Panc1 (cell line): ENCODE measurements at regions of chr12 and their contacts with region 1.

Region 1: GRCh38 chr12:114689075-114689994 is 5.4 kb upstream of the TBX3 start:
- DNase-seq: no peak
- ATAC-seq: no peak
- H3K4me3 ChIP-seq: no peak overlapping the region
- H3K27ac ChIP-seq: no peak overlapping the region
- H3K4me1 ChIP-seq: no peaks in the 10 kb centered on the region
- H3K27me3 ChIP-seq: peaks cover 7% of the 10 kb centered on the region; the same call in 1 of the 2 replicates
- CTCF ChIP-seq: no peak

Region 2: GRCh38 chr12:116411977-116412376 is 1722.6 kb after region 1 on chr12:
- CTCF ChIA-PET with region 1: no interaction called
- POLR2A ChIA-PET with region 1: interaction called, 14 read pairs
- in situ Hi-C with region 1: no loop called
- intact Hi-C with region 1: no loop called
- DNase-seq: no peak
- ATAC-seq: no peak
- H3K4me3 ChIP-seq: no peak overlapping the region
- H3K27ac ChIP-seq: peak overlapping the region; percentile 10; the same call in 1 of the 2 replicates
- H3K4me1 ChIP-seq: peaks cover 29% of the 10 kb centered on the region
- H3K27me3 ChIP-seq: no peaks in the 10 kb centered on the region
- CTCF ChIP-seq: no peak